GM12878 (cell line): ENCODE measurements at regions of chr9 and their contacts with region 1.

Region 1: GRCh38 chr9:125843646-125844045 is 96.5 kb downstream of the PBX3 start:
- DNase-seq: no peak
- ATAC-seq: no peak
- H3K4me3 ChIP-seq: no peak overlapping the region
- H3K27ac ChIP-seq: no peak overlapping the region
- H3K4me1 ChIP-seq: no peaks in the 10 kb centered on the region
- H3K27me3 ChIP-seq: no peaks in the 10 kb centered on the region
- CTCF ChIP-seq: no peak
- EP300 ChIP-seq: no peak
- POLR2A ChIP-seq: no peak
- RAD21 ChIP-seq: no peak

Region 2: GRCh38 chr9:125763394-125763801 is 80.2 kb before region 1 on chr9:
- CTCF ChIA-PET with region 1: no interaction called
- POLR2A ChIA-PET with region 1: no interaction called
- RAD21 ChIA-PET with region 1: no interaction called
- SMC1A ChIA-PET with region 1: no interaction called
- in situ Hi-C with region 1: no loop called
- intact Hi-C with region 1: no loop called
- DNase-seq: no peak
- ATAC-seq: no peak
- H3K4me3 ChIP-seq: no peak overlapping the region
- H3K27ac ChIP-seq: no peak overlapping the region
- H3K4me1 ChIP-seq: peaks cover 17% of the 10 kb centered on the region
- H3K27me3 ChIP-seq: no peaks in the 10 kb centered on the region
- CTCF ChIP-seq: no peak
- EP300 ChIP-seq: no peak
- POLR2A ChIP-seq: no peak
- RAD21 ChIP-seq: no peak

Region 3: DNA sequence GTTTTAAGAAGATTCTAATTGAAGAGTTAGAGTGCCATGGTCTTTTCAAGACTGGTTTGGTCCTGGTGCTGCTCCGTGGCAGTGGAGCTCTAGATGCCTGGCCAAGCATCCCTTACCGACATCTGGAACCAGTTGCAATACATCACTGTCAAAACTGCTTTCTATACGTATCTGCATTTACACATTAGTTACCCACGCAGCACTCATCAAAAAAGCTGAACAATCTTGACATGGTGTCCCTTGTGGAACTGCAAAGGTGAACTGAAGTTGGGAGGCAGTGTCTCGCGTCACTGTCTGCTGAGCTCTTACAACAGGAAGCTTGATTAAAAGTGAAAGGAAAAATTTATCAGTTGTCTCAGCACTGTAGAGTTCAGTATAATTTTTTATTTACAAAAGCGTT is 13.9 kb before region 1 on chr9:
- CTCF ChIA-PET with region 1: interaction called, 5 read pairs
- POLR2A ChIA-PET with region 1: no interaction called
- RAD21 ChIA-PET with region 1: interaction called, 11 read pairs
- SMC1A ChIA-PET with region 1: interaction called, 22 read pairs
- in situ Hi-C with region 1: no loop called
- intact Hi-C with region 1: no loop called
- DNase-seq: peak; percentile 54
- ATAC-seq: peak; percentile 95
- H3K4me3 ChIP-seq: peak overlapping the region; percentile 44
- H3K27ac ChIP-seq: peak overlapping the region; percentile 15; the same call in 1 of the 2 replicates
- H3K4me1 ChIP-seq: no peaks in the 10 kb centered on the region; the same call in 1 of the 2 replicates
- H3K27me3 ChIP-seq: no peaks in the 10 kb centered on the region
- CTCF ChIP-seq: no peak
- EP300 ChIP-seq: no peak
- POLR2A ChIP-seq: peak; percentile 34; the same call in 1 of the 2 replicates
- RAD21 ChIP-seq: no peak

Region 4: DNA sequence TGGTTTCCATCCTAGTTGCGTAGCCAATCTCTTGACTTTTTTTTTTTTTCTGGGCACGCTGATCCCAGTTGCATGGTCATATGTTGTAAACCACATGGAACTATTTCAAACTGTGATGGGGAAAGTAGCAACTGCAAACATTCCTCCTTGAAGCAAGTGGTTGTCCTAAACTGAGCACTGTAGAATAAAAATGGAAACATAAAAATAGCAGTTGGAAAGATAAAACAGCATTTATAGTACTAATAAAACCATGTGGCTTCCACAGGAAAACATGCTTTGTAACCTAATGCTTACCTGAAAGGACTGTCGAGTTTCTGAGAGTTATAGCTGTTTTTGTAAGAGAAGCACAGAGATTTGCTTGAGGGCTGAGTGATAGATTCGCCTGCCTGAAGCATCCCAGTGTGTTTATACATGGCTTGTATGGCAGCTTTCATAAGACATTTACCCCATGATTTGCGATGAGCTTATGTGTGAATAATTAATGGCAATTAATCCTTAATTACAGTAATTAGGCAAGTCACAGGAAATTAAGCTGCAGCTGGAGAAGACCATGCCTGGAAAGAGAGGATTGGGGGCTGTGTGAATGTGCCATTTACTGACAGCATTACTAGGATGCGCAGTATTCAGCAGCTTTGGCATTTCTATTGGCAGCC is 40.0 kb after region 1 on chr9:
- CTCF ChIA-PET with region 1: no interaction called
- POLR2A ChIA-PET with region 1: interaction called, 3 read pairs
- RAD21 ChIA-PET with region 1: no interaction called
- SMC1A ChIA-PET with region 1: interaction called, 3 read pairs
- in situ Hi-C with region 1: no loop called
- intact Hi-C with region 1: loop called (anchors 5 kb)
- DNase-seq: no peak
- ATAC-seq: no peak
- H3K4me3 ChIP-seq: no peak overlapping the region
- H3K27ac ChIP-seq: no peak overlapping the region
- H3K4me1 ChIP-seq: no peaks in the 10 kb centered on the region
- H3K27me3 ChIP-seq: no peaks in the 10 kb centered on the region
- CTCF ChIP-seq: no peak
- EP300 ChIP-seq: no peak
- POLR2A ChIP-seq: no peak
- RAD21 ChIP-seq: no peak

Region 5: DNA sequence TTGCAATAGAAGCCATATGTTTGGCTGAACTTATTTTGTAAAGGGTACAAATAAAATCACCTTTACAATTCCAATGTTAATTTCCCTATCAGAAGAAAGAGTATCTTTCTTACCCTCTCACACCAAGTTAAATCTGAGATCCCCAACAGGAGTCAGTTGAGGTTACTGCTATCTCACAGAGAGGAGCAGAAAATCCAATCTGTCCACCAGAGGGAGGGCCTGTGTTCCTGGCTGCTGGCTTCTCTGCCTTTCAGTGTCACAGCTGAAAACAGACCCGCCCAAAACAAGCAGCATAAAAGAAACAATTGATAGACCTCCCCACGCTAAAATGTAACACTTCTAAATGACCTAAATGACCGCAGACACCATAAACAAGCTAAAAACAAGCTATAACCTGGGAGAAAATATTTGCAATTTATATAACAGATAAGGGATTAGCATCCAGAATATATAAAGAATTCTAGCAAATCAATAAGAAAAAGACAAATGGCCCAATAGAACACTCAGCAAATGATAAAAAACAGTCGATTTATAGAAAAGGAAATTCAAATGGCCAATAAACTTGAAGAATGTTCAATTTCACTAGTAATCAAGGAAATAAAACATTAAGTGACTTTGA is 458.4 kb after region 1 on chr9:
- CTCF ChIA-PET with region 1: no interaction called
- POLR2A ChIA-PET with region 1: no interaction called
- RAD21 ChIA-PET with region 1: no interaction called
- SMC1A ChIA-PET with region 1: no interaction called
- in situ Hi-C with region 1: no loop called
- intact Hi-C with region 1: no loop called
- DNase-seq: no peak
- ATAC-seq: peak; percentile 73
- H3K4me3 ChIP-seq: no peak overlapping the region
- H3K27ac ChIP-seq: no peak overlapping the region
- H3K4me1 ChIP-seq: no peaks in the 10 kb centered on the region
- H3K27me3 ChIP-seq: no peaks in the 10 kb centered on the region
- CTCF ChIP-seq: peak; percentile 44 to 55 (median 50); a peak in 5 of 6 replicates
- EP300 ChIP-seq: no peak
- POLR2A ChIP-seq: no peak
- RAD21 ChIP-seq: peak; percentile 45; the same call in 1 of the 2 replicates